CD4-positive, alpha-beta memory T cell (primary cell): ENCODE measurements at regions of chr11 and their contacts with region 1.

Region 1: DNA sequence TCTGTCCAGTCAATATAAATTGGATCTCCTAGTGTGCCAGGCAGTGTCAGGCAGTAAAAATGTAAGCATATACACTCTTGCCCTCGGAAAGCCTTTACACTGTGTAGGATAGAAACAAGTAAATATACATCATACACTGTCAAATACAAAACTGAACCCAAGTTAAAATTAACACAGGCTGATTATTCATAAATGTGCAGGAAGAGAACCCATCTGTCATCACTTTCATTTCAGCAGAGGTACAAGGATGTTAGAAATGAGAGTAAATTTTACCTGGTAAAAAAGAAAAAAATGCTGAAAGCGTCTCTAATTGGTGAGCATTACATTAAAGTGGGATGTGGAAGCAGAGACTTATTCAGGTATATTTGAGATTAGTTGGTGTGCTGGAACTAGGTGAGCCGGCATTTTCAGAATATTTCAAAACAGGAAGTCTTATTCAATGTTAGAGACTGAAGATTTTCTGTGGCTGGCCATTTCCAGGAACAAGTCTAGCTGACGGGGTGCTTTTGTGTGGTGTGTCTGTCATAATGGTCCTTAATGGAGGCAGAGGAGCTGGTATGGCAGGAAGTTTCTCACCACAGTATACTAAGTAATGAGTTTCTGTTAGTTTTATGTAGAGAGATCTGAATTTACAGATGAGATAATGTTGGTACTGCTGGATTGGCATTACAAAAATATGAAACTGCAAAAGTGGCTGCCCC is 192.6 kb downstream of the CASP12 start:
- DNase-seq: peak; percentile 83 to 90 (median 88)
- H3K4me3 ChIP-seq: peak overlapping the region; percentile 33 to 37
- H3K4me3 Mint-ChIP-seq: peak overlapping the region; percentile 71 to 85 (median 80)
- H3K27ac ChIP-seq: peak overlapping the region; percentile 72
- H3K27ac Mint-ChIP-seq: peak overlapping the region; percentile 86 to 99 (median 96)
- H3K4me1 ChIP-seq: peaks cover 75% of the 10 kb centered on the region
- H3K4me1 Mint-ChIP-seq: peaks cover 48 to 62% (median 55%) of the 10 kb centered on the region in 4 donors
- H3K27me3 ChIP-seq: no peaks in the 10 kb centered on the region
- H3K27me3 Mint-ChIP-seq: no peaks in the 10 kb centered on the region

Region 2: GRCh38 chr11:104609311-104610085 is 96.1 kb before region 1 on chr11:
- CTCF ChIA-PET with region 1: no interaction called
- POLR2A ChIA-PET with region 1: interaction called, 5 read pairs
- intact Hi-C with region 1: loop called (anchors 2 kb)
- DNase-seq: peak; percentile 37 to 62 (median 56)
- H3K4me3 ChIP-seq: no peak overlapping the region
- H3K4me3 Mint-ChIP-seq: peak overlapping the region in 2 of 8 donors; percentile 15 to 18
- H3K27ac ChIP-seq: no peak overlapping the region
- H3K27ac Mint-ChIP-seq: peak overlapping the region in 2 of 7 donors; percentile 37 to 54
- H3K4me1 ChIP-seq: peaks cover 12% of the 10 kb centered on the region
- H3K4me1 Mint-ChIP-seq: peaks cover 10 to 12% (median 11%) of the 10 kb centered on the region in 4 donors
- H3K27me3 ChIP-seq: no peaks in the 10 kb centered on the region
- H3K27me3 Mint-ChIP-seq: no peaks in the 10 kb centered on the region

Region 3: DNA sequence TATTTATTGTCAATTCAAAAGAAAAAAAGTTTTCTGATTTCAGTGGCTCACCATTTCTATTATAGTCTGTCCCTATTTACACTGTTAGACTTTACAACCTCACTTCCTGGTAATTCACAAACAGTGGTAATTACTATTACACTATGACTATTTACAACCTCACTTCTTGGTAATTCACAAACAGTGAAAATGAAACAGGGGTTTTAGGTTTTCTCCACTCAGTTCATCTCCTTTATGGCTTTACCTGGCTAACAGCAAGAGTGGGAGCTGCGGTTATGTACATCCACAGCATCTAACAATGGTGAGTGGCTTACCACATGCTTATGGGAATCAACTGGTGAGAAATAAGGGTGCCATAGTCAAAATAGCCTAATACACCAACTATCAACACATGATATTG is 26.2 kb after region 1 on chr11:
- CTCF ChIA-PET with region 1: no interaction called
- POLR2A ChIA-PET with region 1: interaction called, 11 read pairs
- intact Hi-C with region 1: no loop called
- DNase-seq: no peak
- H3K4me3 ChIP-seq: no peak overlapping the region
- H3K4me3 Mint-ChIP-seq: no peak overlapping the region
- H3K27ac ChIP-seq: no peak overlapping the region
- H3K27ac Mint-ChIP-seq: no peak overlapping the region
- H3K4me1 ChIP-seq: no peaks in the 10 kb centered on the region
- H3K4me1 Mint-ChIP-seq: peaks cover 3 to 14% (median 10%) of the 10 kb centered on the region in 4 donors
- H3K27me3 ChIP-seq: no peaks in the 10 kb centered on the region
- H3K27me3 Mint-ChIP-seq: no peaks in the 10 kb centered on the region

Region 4: DNA sequence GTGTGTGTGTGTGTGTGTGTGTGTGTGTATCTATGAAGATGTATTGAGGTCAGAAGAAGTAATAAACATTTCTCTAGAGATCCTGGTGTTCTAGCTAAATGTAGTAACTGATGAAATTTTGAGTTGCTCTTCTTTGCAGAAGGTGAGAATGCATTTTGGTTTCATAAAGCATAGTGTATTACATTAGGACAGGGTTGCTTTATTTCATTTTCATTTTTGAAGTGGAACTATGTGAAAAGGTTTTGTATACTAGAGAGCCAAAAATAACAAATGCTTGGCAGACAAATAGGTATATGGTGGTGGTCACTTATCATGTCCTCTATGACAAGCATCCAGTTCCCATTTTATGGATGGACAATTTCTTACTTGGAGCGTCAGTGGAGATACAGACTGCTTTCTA is 93.6 kb after region 1 on chr11:
- CTCF ChIA-PET with region 1: interaction called, 3 read pairs
- POLR2A ChIA-PET with region 1: interaction called, 12 read pairs
- intact Hi-C with region 1: loop called (anchors 2 kb)
- DNase-seq: peak in 3 of 5 donors; percentile 6 to 14 (median 9)
- H3K4me3 ChIP-seq: peak overlapping the region in 1 of 2 donors; percentile 16
- H3K4me3 Mint-ChIP-seq: peak overlapping the region; percentile 80 to 93 (median 84)
- H3K27ac ChIP-seq: no peak overlapping the region
- H3K27ac Mint-ChIP-seq: peak overlapping the region; percentile 71 to 92 (median 89)
- H3K4me1 ChIP-seq: peaks cover 29% of the 10 kb centered on the region
- H3K4me1 Mint-ChIP-seq: peaks cover 24 to 37% (median 33%) of the 10 kb centered on the region in 4 donors
- H3K27me3 ChIP-seq: no peaks in the 10 kb centered on the region
- H3K27me3 Mint-ChIP-seq: no peaks in the 10 kb centered on the region

Region 5: DNA sequence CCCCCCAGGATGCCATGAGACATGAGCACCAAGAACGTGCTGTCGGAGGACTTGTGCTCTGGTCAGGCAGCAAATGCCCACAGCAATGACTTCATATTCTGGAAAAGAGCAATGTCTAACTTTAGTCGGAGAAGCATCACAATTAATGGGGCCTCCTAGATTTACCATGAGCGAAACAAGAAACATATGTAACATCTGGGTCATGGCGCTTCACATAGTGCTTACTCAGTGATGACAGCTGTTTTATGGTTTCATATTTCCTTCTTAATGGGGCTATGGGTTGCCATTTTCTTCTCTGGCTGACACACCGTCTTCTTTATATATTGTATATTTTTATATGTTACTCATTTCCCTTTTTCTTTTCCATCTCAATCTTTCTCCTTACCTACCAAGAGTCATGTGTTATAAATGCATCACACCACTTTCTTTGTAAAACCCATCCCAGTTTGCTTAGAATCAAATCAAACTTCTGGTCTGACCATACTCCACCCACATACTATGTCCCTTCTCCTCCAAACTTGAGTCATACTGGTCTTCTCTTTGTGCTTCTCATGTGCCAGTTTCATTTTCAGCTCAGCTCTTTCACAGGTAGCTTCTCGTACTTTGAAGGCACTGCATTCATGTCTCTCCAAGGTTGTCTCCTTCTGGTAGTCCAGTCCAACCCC is 202.0 kb after region 1 on chr11:
- CTCF ChIA-PET with region 1: no interaction called
- POLR2A ChIA-PET with region 1: no interaction called
- intact Hi-C with region 1: no loop called
- DNase-seq: peak in 1 of 5 donors; percentile 24
- H3K4me3 ChIP-seq: peak overlapping the region in 1 of 2 donors; percentile 7
- H3K4me3 Mint-ChIP-seq: peak overlapping the region in 7 of 8 donors; percentile 32 to 84 (median 59)
- H3K27ac ChIP-seq: no peak overlapping the region
- H3K27ac Mint-ChIP-seq: peak overlapping the region in 6 of 7 donors; percentile 0 to 91 (median 73)
- H3K4me1 ChIP-seq: peaks cover 23% of the 10 kb centered on the region
- H3K4me1 Mint-ChIP-seq: peaks cover 19 to 22% (median 21%) of the 10 kb centered on the region in 4 donors
- H3K27me3 ChIP-seq: no peaks in the 10 kb centered on the region
- H3K27me3 Mint-ChIP-seq: no peaks in the 10 kb centered on the region

Region 6: DNA sequence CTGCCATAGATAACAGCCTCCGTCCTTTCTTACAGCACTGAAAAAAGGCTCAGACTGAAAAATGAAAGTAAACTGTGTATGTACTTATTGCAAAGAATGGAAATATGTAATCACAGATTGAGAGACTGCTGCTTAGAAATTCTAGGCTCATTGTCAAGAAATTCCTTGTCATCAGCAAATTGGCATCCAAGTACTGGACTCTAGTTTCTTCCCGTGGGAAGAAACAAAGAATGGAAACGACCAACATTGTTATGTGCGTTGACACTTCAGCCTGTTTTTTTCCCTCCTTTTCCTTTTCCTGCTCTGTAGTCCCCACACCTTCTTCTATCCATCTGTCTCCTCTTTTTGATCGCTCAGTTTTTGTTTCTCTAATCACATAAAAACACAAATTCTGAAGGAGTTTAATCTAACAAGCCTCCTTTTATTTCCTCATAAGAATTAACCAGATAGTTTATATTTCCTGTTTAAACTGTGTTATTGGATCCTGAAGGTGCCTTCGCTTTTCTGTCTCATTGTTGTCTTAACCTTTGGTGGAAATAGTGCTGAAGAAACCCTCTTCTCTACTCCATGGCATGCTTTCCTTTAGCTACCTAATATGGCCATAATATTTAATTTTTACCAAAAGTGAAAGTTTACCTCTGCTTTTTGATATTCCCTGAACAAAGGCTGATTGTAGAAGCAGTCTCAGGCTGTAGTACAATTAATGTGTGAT is 212.6 kb after region 1 on chr11:
- CTCF ChIA-PET with region 1: interaction called, 3 read pairs
- POLR2A ChIA-PET with region 1: interaction called, 19 read pairs
- intact Hi-C with region 1: loop called (anchors 1 kb)
- DNase-seq: peak in 3 of 5 donors; percentile 33 to 46 (median 40)
- H3K4me3 ChIP-seq: peak overlapping the region; percentile 56 to 75
- H3K4me3 Mint-ChIP-seq: peak overlapping the region; percentile 79 to 99 (median 96)
- H3K27ac ChIP-seq: peak overlapping the region; percentile 56
- H3K27ac Mint-ChIP-seq: peak overlapping the region; percentile 79 to 99 (median 97)
- H3K4me1 ChIP-seq: peaks cover 54% of the 10 kb centered on the region
- H3K4me1 Mint-ChIP-seq: peaks cover 42 to 67% (median 50%) of the 10 kb centered on the region in 4 donors
- H3K27me3 ChIP-seq: no peaks in the 10 kb centered on the region
- H3K27me3 Mint-ChIP-seq: no peaks in the 10 kb centered on the region

Region 7: GRCh38 chr11:105044921-105045524 is 339.4 kb after region 1 on chr11 and contains the start of gene CARD16:
- CTCF ChIA-PET with region 1: no interaction called
- POLR2A ChIA-PET with region 1: interaction called, 3 read pairs
- intact Hi-C with region 1: loop called (anchors 10 kb)
- DNase-seq: peak; percentile 45 to 58 (median 56)
- H3K4me3 ChIP-seq: peak within 1 kb of the TSS; percentile 60 to 87
- H3K4me3 Mint-ChIP-seq: peak within 1 kb of the TSS; percentile 94 to 99 (median 98)
- H3K27ac ChIP-seq: peak within 1 kb of the TSS; percentile 73
- H3K27ac Mint-ChIP-seq: peak within 1 kb of the TSS; percentile 77 to 100 (median 98)
- H3K4me1 ChIP-seq: peaks cover 40% of the 10 kb centered on the region
- H3K4me1 Mint-ChIP-seq: peaks cover 36 to 66% (median 42%) of the 10 kb centered on the region in 4 donors
- H3K27me3 ChIP-seq: no peaks in the 10 kb centered on the region
- H3K27me3 Mint-ChIP-seq: no peaks in the 10 kb centered on the region
- total RNA-seq, gene CARD16: 56.1 to 59.0 TPM